CD8-positive, alpha-beta memory T cell (primary cell): ENCODE measurements at regions of chr11 and their contacts with region 1.

Region 1: DNA sequence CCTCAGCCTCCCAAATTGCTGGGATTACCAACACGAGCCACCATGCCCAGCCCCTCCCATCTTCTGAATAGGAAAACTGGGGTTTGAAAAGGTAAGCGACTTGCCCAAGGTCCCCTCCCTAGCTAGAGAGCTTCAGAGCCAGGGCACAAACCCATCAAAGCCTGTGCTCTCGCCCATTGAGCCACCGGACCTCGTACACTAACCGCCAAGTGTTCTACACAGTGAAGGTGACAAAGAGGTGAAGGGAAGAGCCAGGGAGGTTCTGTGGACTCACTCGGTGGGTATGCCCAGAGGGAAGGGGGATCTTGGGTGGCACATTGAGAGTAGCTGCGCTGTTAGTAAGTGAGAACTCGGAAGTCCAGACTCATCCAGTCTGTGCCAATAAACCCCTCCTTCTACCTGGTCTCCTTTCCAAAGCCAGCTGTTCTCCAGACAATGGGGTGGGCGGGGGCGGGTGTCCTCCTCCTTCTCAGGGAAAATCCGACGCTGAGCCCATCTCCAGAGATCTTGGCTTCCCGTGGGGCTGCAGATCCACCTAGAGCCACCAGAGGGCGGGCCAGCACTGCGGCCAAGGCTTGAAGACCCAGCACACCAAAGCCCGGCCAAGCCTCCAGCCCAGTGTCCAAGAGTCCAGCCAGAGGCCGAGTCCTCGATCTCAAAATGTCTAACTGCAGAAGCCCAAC is 3.2 kb upstream of the RTN4RL2 start:
- DNase-seq: peak; percentile 58 to 79 (median 63)
- H3K4me3 ChIP-seq: no peak overlapping the region
- H3K4me3 Mint-ChIP-seq: peak overlapping the region; percentile 72 to 88 (median 78)
- H3K27ac ChIP-seq: no peak overlapping the region
- H3K27ac Mint-ChIP-seq: peak overlapping the region in 7 of 8 donors; percentile 15 to 83 (median 48)
- H3K4me1 ChIP-seq: peaks cover 29% of the 10 kb centered on the region
- H3K4me1 Mint-ChIP-seq: peaks cover 25 to 37% (median 28%) of the 10 kb centered on the region in 3 donors
- H3K27me3 ChIP-seq: peaks cover 27% of the 10 kb centered on the region
- H3K27me3 Mint-ChIP-seq: peaks cover 23 to 35% of the 10 kb centered on the region in 2 donors

Region 2: DNA sequence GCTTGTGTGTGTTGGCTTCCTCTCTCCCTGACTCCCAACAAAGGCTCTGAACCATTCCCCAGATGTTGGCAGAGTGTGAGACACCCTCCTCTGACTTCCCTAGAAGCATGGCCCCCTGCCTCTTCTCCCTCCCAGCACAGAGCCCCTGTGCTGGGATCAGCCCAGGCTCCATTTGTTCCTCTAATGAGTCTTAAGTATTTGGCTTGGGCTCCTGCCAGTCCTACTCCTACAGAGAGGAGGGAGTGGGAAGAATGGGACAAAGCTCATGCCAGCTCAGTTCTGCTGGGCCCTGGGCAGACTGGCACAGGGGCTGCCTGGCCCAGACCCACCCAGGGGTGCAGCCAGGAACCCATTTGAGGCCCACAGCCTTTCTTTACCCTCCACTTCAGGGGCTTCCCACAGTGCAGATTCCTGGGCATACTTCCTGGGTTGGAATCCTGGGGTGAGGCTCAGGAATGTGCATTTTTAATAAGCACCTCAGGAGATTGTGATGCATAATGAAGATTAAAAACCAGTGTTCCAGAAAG is 162.4 kb before region 1 on chr11:
- CTCF ChIA-PET with region 1: no interaction called
- POLR2A ChIA-PET with region 1: no interaction called
- DNase-seq: no peak
- H3K4me3 ChIP-seq: no peak overlapping the region
- H3K4me3 Mint-ChIP-seq: no peak overlapping the region
- H3K27ac ChIP-seq: no peak overlapping the region
- H3K27ac Mint-ChIP-seq: no peak overlapping the region
- H3K4me1 ChIP-seq: no peaks in the 10 kb centered on the region
- H3K4me1 Mint-ChIP-seq: no peaks in the 10 kb centered on the region
- H3K27me3 ChIP-seq: no peaks in the 10 kb centered on the region
- H3K27me3 Mint-ChIP-seq: peaks cover 1 to 16% of the 10 kb centered on the region in 2 donors

Region 3: DNA sequence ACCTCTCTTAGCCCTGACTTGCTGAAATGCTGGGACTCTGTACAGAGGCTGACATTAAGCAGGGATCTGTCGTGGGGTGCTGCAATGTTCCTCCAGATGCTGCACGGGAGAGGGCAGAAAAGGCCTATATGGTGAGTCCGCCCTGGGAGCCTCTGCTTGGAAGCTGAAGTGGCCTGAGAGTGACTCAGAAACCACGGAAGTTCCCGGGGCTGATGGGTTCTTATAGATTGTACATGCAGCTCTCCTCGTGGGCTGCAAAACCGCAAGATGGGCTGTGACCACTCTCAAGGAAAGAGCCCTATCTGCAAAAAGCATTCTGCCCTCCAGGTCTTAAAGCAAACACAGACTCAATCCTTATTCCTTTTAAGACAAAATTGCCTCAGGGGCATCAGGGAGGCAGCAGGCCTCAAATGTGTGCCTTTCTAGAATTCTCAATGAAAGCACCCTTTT is 24.4 kb before region 1 on chr11:
- CTCF ChIA-PET with region 1: interaction called, 62 read pairs
- POLR2A ChIA-PET with region 1: no interaction called
- DNase-seq: no peak
- H3K4me3 ChIP-seq: no peak overlapping the region
- H3K4me3 Mint-ChIP-seq: no peak overlapping the region
- H3K27ac ChIP-seq: peak overlapping the region; percentile 16
- H3K27ac Mint-ChIP-seq: peak overlapping the region in 2 of 8 donors; percentile 10 to 12
- H3K4me1 ChIP-seq: no peaks in the 10 kb centered on the region
- H3K4me1 Mint-ChIP-seq: peaks cover 0 to 4% (median under 1%) of the 10 kb centered on the region in 3 donors
- H3K27me3 ChIP-seq: no peaks in the 10 kb centered on the region
- H3K27me3 Mint-ChIP-seq: no peaks in the 10 kb centered on the region

Region 4: DNA sequence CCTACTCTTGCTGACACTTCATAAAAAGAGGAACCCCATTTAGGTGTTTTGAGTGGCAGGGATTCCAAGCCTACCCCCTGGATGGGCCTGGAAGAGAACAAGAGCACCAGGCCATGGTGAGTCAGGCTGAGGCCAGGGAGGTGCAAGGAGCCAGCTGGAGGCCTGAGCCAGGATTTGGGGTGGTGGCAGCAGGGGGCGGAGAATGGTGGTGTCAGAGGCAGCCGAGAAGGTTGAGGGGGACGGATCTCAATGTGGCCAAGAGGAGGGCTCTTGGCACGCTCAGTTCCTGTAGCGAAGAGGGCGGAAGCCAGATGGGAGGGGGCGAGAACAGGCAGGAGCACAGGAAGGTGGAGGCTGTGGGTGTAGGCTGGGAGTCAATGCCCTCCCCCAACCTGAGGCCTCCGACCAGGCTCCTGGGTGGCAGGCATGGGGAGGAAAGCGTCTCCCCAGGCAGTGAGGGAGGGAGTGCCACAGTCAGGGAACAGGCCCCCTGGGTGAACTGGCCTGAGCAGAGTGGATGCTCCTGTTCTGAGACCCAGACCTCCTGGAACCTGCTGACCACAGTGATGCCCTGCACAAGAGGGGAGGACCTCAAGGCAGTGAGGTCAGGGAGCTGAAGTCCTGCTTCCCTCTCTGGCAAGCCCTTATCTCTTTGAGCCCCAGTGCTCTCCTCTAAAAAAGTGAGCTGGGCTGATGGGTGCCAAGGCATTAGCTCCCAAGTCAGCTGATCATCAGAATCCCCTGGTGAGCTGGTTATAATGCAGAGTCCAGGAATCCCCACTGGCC is 17.1 kb after region 1 on chr11:
- CTCF ChIA-PET with region 1: interaction called, 151 read pairs
- POLR2A ChIA-PET with region 1: interaction called, 4 read pairs
- DNase-seq: peak; percentile 8 to 68 (median 36)
- H3K4me3 ChIP-seq: peak overlapping the region; percentile 28
- H3K4me3 Mint-ChIP-seq: peak overlapping the region; percentile 34 to 90 (median 56)
- H3K27ac ChIP-seq: no peak overlapping the region
- H3K27ac Mint-ChIP-seq: peak overlapping the region in 5 of 8 donors; percentile 11 to 84 (median 70)
- H3K4me1 ChIP-seq: peaks cover 27% of the 10 kb centered on the region
- H3K4me1 Mint-ChIP-seq: peaks cover 22 to 44% (median 22%) of the 10 kb centered on the region in 3 donors
- H3K27me3 ChIP-seq: peaks cover 5% of the 10 kb centered on the region
- H3K27me3 Mint-ChIP-seq: peaks cover 1 to 3% of the 10 kb centered on the region in 2 donors

Region 5: GRCh38 chr11:57493507-57494503 is 36.7 kb after region 1 on chr11:
- CTCF ChIA-PET with region 1: interaction called, 24 read pairs
- POLR2A ChIA-PET with region 1: no interaction called
- DNase-seq: peak; percentile 61 to 83 (median 66)
- H3K4me3 ChIP-seq: no peak overlapping the region
- H3K4me3 Mint-ChIP-seq: no peak overlapping the region
- H3K27ac ChIP-seq: no peak overlapping the region
- H3K27ac Mint-ChIP-seq: no peak overlapping the region
- H3K4me1 ChIP-seq: no peaks in the 10 kb centered on the region
- H3K4me1 Mint-ChIP-seq: no peaks in the 10 kb centered on the region
- H3K27me3 ChIP-seq: no peaks in the 10 kb centered on the region
- H3K27me3 Mint-ChIP-seq: no peaks in the 10 kb centered on the region

Region 6: DNA sequence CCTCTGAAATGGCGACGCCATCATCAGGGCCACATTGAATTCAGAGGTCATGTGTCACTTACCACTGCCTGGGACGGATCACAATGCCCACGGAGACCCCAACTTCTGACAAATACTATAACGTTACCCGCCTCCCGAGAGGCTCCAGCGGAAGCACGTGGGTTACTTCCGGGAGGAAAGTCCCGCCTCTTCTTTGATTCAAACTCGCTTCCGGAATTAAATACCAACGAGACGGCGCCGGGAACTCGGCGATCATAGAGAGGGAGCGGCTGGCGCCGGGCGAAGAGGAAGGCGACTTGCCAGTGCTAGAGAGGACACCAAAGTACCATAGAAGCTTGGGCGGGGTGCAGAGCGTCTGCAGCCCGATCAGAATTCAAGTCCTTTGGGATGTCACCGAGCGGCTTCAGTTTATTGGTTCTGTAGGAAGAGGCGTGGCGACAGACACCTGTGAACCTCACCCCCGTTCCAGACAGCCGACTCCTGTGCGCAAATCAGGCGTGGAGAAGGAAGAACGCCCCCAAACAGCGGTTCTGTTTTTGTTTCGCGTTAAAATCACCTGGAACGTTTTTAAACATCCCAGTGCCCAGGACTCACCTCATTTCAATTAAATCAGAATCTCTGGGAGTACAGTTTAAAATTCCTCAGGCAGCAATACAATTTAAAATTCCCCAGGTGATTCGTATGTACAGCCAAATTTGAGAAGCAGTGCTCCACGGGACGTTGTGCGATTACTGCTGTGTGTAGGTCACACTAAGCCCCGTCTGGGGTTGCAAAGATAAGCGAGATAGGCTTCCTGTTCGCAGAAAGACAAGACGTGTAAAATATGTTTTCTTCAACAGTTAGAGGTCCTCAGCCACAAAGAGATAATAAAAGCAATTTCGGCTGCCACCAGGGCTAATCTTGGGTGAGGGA is 73.8 kb after region 1 on chr11 and contains the start of gene TIMM10:
- CTCF ChIA-PET with region 1: interaction called, 101 read pairs
- POLR2A ChIA-PET with region 1: interaction called, 5 read pairs
- DNase-seq: peak; percentile 84 to 97 (median 95)
- H3K4me3 ChIP-seq: peak within 1 kb of the TSS; percentile 88
- H3K4me3 Mint-ChIP-seq: peak within 1 kb of the TSS; percentile 85 to 96 (median 90)
- H3K27ac ChIP-seq: peak within 1 kb of the TSS; percentile 86
- H3K27ac Mint-ChIP-seq: peak within 1 kb of the TSS; percentile 89 to 99 (median 97)
- H3K4me1 ChIP-seq: peaks cover 19% of the 10 kb centered on the region
- H3K4me1 Mint-ChIP-seq: peaks cover 26 to 41% (median 35%) of the 10 kb centered on the region in 3 donors
- H3K27me3 ChIP-seq: no peaks in the 10 kb centered on the region
- H3K27me3 Mint-ChIP-seq: peaks cover 0 to 3% of the 10 kb centered on the region in 2 donors
- total RNA-seq, gene TIMM10: 151 to 154 TPM

Region 7: DNA sequence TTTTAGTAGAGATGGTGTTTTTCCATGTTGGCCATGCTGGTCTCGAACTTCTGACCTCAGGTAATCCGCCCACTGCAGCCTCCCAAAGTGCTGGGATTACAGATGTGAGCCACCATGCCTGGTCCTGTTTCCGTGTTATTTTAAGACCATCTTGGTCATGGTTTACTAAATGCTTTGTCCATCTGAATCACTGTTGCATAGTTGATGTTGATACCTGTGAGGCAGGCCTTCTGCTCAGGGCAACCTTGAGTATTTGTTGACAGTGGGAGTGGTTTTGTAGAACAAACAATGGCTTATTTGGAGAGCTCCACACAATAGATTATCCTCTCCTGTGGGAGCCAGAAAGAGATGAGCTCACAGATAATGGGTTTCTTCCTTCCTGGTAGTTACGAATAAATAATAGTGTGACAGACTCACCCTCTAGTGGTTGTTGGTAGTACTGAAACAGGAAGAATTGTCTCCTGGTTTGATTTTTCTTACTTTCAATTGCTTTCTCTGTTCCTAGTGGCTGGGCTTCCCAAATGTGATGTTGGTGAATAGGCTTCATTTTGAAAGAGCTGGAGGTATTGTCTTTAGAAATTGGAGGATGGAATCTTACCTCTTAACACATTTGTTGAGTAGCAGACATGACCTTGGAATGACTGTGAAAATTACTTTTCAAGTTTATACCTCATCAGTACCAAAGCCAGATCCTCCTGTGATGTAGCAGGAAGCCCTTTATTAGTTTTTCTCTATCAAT is 343.5 kb after region 1 on chr11:
- CTCF ChIA-PET with region 1: interaction called, 13 read pairs
- POLR2A ChIA-PET with region 1: no interaction called
- DNase-seq: peak in 2 of 5 donors; percentile 57 to 65
- H3K4me3 ChIP-seq: no peak overlapping the region
- H3K4me3 Mint-ChIP-seq: peak overlapping the region in 2 of 7 donors; percentile 15 to 41
- H3K27ac ChIP-seq: no peak overlapping the region
- H3K27ac Mint-ChIP-seq: peak overlapping the region; percentile 30 to 92 (median 86)
- H3K4me1 ChIP-seq: peaks cover 22% of the 10 kb centered on the region
- H3K4me1 Mint-ChIP-seq: peaks cover 11 to 21% (median 13%) of the 10 kb centered on the region in 3 donors
- H3K27me3 ChIP-seq: no peaks in the 10 kb centered on the region
- H3K27me3 Mint-ChIP-seq: peaks cover 0 to 2% of the 10 kb centered on the region in 2 donors